Mammary epithelial cell (primary cell): ENCODE measurements at regions of chr12 and their contacts with region 1.

Region 1: DNA sequence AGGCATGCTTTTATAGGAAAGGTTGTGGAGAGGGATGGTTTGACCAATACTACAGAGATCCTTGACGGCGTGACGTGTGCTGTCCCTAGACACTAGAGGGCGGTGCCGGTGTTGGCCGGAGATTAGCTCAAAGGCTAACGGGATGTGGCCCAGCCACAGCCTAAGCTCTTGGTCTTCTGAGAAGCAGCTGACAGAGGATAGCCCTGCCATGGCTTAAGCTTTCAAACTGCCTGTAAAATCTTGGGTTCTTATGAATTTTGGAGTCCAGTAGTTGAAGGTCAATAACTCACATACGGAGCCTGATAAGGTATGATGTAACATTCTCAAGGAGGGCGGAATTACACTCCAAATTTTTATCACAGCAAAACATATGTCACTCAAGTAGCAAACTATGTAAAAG is 515.7 kb upstream of the ATXN7L3B start:
- DNase-seq: peak; percentile 55
- H3K4me3 ChIP-seq: no peak overlapping the region
- H3K27ac ChIP-seq: no peak overlapping the region
- H3K4me1 ChIP-seq: no peaks in the 10 kb centered on the region
- H3K27me3 ChIP-seq: no peaks in the 10 kb centered on the region
- CTCF ChIP-seq: peak; percentile 67 to 89

Region 2: DNA sequence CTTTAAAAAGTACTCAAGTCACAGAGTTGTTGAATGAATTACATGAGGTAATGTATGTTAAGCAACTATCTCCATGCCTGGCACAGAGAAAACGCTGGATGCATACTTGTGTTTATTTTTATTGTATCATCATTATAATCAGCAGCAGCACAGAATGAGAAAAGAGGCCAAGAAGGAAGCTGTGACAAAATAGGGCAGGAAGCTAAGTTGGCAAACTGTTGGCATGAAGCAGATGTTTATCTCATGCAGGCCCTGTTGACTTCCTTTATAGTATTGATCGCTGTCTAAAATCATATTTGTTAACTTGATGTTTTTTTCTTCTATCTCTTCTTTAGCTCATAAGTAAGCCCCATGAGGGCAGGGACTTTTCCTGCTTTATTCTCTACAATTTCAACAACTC is 1283.1 kb before region 1 on chr12:
- CTCF ChIA-PET with region 1: no interaction called
- dilution Hi-C with region 1: no loop called
- in situ Hi-C with region 1: no loop called
- intact Hi-C with region 1: no loop called
- DNase-seq: no peak
- H3K4me3 ChIP-seq: no peak overlapping the region
- H3K27ac ChIP-seq: no peak overlapping the region
- H3K4me1 ChIP-seq: no peaks in the 10 kb centered on the region
- H3K27me3 ChIP-seq: no peaks in the 10 kb centered on the region
- CTCF ChIP-seq: no peak

Region 3: GRCh38 chr12:73815072-73815645 is 206.8 kb before region 1 on chr12:
- CTCF ChIA-PET with region 1: no interaction called
- dilution Hi-C with region 1: no loop called
- in situ Hi-C with region 1: no loop called
- intact Hi-C with region 1: no loop called
- DNase-seq: no peak
- H3K4me3 ChIP-seq: no peak overlapping the region
- H3K27ac ChIP-seq: no peak overlapping the region
- H3K4me1 ChIP-seq: no peaks in the 10 kb centered on the region
- H3K27me3 ChIP-seq: no peaks in the 10 kb centered on the region
- CTCF ChIP-seq: no peak

Region 4: GRCh38 chr12:74365178-74365964 is 343.4 kb after region 1 on chr12:
- CTCF ChIA-PET with region 1: no interaction called
- dilution Hi-C with region 1: no loop called
- in situ Hi-C with region 1: no loop called
- intact Hi-C with region 1: loop called (anchors 5 kb)
- DNase-seq: peak; percentile 34
- H3K4me3 ChIP-seq: no peak overlapping the region
- H3K27ac ChIP-seq: no peak overlapping the region
- H3K4me1 ChIP-seq: no peaks in the 10 kb centered on the region
- H3K27me3 ChIP-seq: peaks cover 5% of the 10 kb centered on the region
- CTCF ChIP-seq: peak; percentile 74 to 80

Region 5: DNA sequence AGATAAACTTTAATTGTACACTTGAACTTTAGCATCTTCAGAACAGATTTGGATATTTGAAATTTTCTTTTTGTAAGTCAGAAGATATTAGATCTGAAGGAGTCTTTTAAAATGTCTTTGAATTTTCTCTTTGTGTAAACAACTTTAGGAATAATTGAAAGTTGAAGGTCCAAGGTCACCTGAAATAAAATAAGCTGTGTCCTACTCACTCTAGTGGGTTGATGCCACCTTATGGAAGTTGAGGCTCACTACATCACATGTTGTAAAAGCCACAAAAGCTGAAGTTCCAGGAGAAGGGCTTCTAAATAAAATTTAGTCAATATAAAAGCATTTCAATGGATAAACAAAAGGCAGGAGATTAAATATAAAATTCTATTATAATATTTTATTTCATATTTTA is 393.7 kb after region 1 on chr12:
- CTCF ChIA-PET with region 1: no interaction called
- dilution Hi-C with region 1: no loop called
- in situ Hi-C with region 1: no loop called
- intact Hi-C with region 1: loop called (anchors 2 kb)
- DNase-seq: peak; percentile 15
- H3K4me3 ChIP-seq: no peak overlapping the region
- H3K27ac ChIP-seq: no peak overlapping the region
- H3K4me1 ChIP-seq: no peaks in the 10 kb centered on the region
- H3K27me3 ChIP-seq: no peaks in the 10 kb centered on the region
- CTCF ChIP-seq: peak; percentile 45 to 64

Region 6: GRCh38 chr12:74537707-74538385 is 515.9 kb after region 1 on chr12 and contains the start of gene ATXN7L3B:
- CTCF ChIA-PET with region 1: no interaction called
- dilution Hi-C with region 1: no loop called
- in situ Hi-C with region 1: no loop called
- intact Hi-C with region 1: loop called (anchors 10 kb)
- DNase-seq: peak; percentile 94
- H3K4me3 ChIP-seq: peak within 1 kb of the TSS; percentile 67 to 78 (median 69)
- H3K27ac ChIP-seq: peak within 1 kb of the TSS; percentile 97
- H3K4me1 ChIP-seq: peaks cover 24% of the 10 kb centered on the region
- H3K27me3 ChIP-seq: no peaks in the 10 kb centered on the region
- CTCF ChIP-seq: peak in 1 of 2 donors; percentile 8
- total RNA-seq, gene ATXN7L3B: 22.0 to 22.2 TPM